Mammary epithelial cell (primary cell): ENCODE measurements at regions of chr1 and their contacts with region 1.

Region 1: DNA sequence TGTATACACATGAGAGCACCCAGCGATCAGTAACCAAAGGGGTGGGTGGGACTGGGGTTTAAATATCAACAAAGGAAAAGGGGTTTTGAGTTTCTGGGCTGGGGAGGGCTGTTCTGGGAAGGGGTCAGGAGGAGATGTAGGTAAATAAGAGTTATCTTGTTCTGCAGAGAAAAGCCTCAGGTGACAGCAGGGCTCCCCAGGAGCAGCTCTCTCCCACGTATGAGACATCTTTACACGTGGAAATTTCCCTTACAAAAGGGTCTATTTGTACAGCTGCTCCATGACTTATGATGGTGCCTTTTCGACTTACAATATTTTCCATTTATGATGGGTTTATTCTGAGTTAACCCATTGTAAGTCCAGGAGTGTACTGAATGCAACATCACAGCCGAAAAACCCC is 16.3 kb upstream of the PADI2 start:
- DNase-seq: no peak
- H3K4me3 ChIP-seq: no peak overlapping the region
- H3K27ac ChIP-seq: no peak overlapping the region
- H3K4me1 ChIP-seq: no peaks in the 10 kb centered on the region
- H3K27me3 ChIP-seq: no peaks in the 10 kb centered on the region
- CTCF ChIP-seq: no peak

Region 2: GRCh38 chr1:17089506-17089905 is 46.0 kb before region 1 on chr1:
- CTCF ChIA-PET with region 1: no interaction called
- dilution Hi-C with region 1: loop called (anchors 10 kb)
- in situ Hi-C with region 1: no loop called
- intact Hi-C with region 1: no loop called
- DNase-seq: no peak
- H3K4me3 ChIP-seq: no peak overlapping the region
- H3K27ac ChIP-seq: no peak overlapping the region
- H3K4me1 ChIP-seq: peaks cover 6% of the 10 kb centered on the region
- H3K27me3 ChIP-seq: no peaks in the 10 kb centered on the region
- CTCF ChIP-seq: no peak

Region 3: GRCh38 chr1:17190010-17190995 is 54.8 kb after region 1 on chr1:
- CTCF ChIA-PET with region 1: no interaction called
- dilution Hi-C with region 1: loop called (anchors 5 kb)
- in situ Hi-C with region 1: no loop called
- intact Hi-C with region 1: no loop called
- DNase-seq: peak; percentile 92
- H3K4me3 ChIP-seq: no peak overlapping the region
- H3K27ac ChIP-seq: peak overlapping the region; percentile 64
- H3K4me1 ChIP-seq: peaks cover 61% of the 10 kb centered on the region
- H3K27me3 ChIP-seq: no peaks in the 10 kb centered on the region
- CTCF ChIP-seq: no peak

Region 4: DNA sequence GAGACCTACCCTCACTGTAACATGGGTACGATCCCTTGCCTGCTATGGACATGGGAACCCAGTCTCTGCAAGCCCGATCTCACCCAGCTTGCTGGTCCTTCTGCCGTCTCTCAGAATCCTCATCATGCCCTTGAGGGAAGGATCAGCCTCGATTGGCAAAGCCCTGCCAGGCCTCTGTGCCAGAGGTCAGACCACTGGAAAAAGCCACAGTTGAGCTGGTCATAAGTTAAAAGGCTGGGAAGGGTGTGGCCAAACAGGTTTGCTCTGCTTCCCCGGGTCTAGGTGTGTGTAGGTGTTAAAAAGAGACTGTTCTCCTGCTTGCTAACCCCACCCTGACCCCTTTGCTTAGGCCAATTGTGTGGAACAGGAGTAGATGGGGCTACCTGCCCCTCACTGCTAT is 93.9 kb after region 1 on chr1:
- CTCF ChIA-PET with region 1: no interaction called
- dilution Hi-C with region 1: loop called (anchors 10 kb)
- in situ Hi-C with region 1: no loop called
- intact Hi-C with region 1: no loop called
- DNase-seq: peak; percentile 56
- H3K4me3 ChIP-seq: no peak overlapping the region
- H3K27ac ChIP-seq: no peak overlapping the region
- H3K4me1 ChIP-seq: peaks cover 45% of the 10 kb centered on the region
- H3K27me3 ChIP-seq: no peaks in the 10 kb centered on the region
- CTCF ChIP-seq: no peak

Region 5: DNA sequence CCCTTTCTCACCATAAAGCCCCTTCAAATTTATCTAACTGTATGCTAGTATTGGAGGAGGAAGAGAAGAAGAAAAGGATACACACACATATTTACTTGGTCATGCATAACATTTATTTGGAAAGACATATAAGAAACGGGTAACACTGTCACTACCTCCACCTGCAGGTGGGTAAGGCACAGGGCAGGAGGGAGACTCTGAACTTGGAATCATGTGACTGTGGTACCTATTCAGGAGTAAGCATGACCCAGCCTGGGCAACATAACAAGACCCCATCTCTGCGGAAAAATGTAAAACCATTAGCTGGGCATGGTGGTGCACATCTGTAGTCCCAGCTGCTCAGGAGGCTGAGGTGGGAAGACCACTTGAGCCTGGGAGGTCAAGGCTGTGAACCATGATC is 235.1 kb after region 1 on chr1:
- CTCF ChIA-PET with region 1: no interaction called
- dilution Hi-C with region 1: loop called (anchors 5 kb)
- in situ Hi-C with region 1: no loop called
- intact Hi-C with region 1: no loop called
- DNase-seq: peak; percentile 32
- H3K4me3 ChIP-seq: no peak overlapping the region
- H3K27ac ChIP-seq: no peak overlapping the region
- H3K4me1 ChIP-seq: peaks cover 32% of the 10 kb centered on the region
- H3K27me3 ChIP-seq: no peaks in the 10 kb centered on the region
- CTCF ChIP-seq: peak; percentile 72